Dendritic cell treated with granulocyte-macrophage colony-stimulating factor and Interleukin-4, amounts not matched to agents 40 ng/mL and 50 ng/mL, for 4 days (primary cell): ENCODE measurements at regions of chr6 and their contacts with region 1.

Region 1: DNA sequence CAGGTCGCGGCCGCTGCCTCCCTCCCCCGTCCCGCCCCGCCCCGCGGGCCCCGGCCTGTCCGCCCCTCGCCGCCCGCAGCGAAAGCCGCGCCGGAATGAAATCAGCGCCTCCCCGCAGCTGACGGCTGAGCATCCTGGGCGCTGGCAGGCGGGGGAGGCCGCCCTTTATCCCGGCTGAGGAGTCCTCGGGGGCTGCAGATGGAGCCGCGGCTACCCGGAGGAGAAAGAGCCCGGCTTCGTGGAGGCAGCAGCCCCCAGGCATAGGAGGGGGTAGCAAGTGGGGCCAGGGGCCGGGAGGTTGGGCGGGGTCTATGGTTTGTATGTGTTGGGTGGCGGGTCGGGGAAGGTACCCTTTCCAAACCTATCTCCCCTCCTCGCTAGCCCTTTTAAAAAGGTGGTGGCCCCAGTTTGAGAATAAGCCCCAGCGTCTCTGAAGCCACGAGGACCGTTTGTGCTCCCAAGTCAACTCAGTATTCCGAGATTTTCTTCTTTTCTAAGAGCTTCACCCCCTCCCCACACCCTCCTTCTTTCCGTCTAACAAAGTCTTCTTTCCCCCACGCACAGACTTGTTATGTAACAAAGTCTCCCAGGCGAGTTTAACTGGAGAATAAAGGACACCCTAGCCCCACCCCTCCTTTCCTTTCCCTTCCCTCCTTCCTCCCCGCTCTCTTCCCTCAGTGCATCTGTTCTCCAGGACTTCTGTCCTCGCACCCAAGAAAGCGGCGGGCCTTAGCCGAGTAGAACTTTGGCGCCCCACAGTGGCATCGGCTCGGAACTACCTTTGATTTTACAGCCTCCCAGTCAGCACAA is 11.0 kb downstream of the POU3F2 start:
- H3K4me3 Mint-ChIP-seq: peak overlapping the region; percentile 35
- H3K27ac Mint-ChIP-seq: no peak overlapping the region
- H3K4me1 Mint-ChIP-seq: peaks cover 29% of the 10 kb centered on the region
- H3K27me3 Mint-ChIP-seq: peaks cover 95% of the 10 kb centered on the region

Region 2: GRCh38 chr6:97068211-97068610 is 1777.2 kb before region 1 on chr6:
- intact Hi-C with region 1: loop called (anchors 5 kb)
- H3K4me3 Mint-ChIP-seq: no peak overlapping the region
- H3K27ac Mint-ChIP-seq: no peak overlapping the region
- H3K4me1 Mint-ChIP-seq: no peaks in the 10 kb centered on the region
- H3K27me3 Mint-ChIP-seq: peaks cover 2% of the 10 kb centered on the region

Region 3: DNA sequence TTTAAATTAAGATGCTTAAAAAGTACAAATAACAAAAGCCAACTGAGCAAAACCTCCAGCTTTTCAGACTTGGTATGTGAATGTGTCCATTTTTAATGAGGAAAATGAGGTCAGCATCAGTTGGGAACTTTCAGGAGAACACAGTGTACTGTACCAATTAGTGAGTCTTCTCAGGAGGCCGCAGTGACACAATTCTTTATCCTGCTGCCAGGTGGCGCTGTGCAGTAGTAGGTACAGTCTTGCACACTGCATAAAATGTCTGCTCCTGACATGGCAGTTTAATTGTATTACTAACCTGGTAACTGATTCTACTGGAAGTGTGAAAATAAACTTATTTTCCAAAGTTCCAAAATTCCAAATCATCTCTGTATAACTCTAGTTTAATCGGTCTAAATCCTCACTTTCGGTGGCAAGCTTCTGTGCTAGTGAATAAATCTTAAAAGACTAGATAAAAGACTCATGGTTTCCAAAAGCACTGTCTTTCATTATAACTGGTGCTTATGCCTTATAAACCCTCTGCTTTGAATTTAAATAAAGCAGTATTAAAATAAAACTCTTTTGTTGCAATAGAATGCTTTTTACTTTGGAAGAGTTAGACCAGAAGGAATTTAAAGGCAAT is 1347.6 kb before region 1 on chr6:
- intact Hi-C with region 1: loop called (anchors 2 kb)
- H3K4me3 Mint-ChIP-seq: no peak overlapping the region
- H3K27ac Mint-ChIP-seq: no peak overlapping the region
- H3K4me1 Mint-ChIP-seq: no peaks in the 10 kb centered on the region
- H3K27me3 Mint-ChIP-seq: peaks cover 5% of the 10 kb centered on the region

Region 4: GRCh38 chr6:99119109-99120031 is 274.0 kb after region 1 on chr6:
- intact Hi-C with region 1: loop called (anchors 1 kb)
- H3K4me3 Mint-ChIP-seq: no peak overlapping the region
- H3K27ac Mint-ChIP-seq: no peak overlapping the region
- H3K4me1 Mint-ChIP-seq: no peaks in the 10 kb centered on the region
- H3K27me3 Mint-ChIP-seq: peaks cover 4% of the 10 kb centered on the region